Psoas muscle (tissue), 8 donors: ENCODE measurements at regions of chr3 and their contacts with region 1.

Region 1: DNA sequence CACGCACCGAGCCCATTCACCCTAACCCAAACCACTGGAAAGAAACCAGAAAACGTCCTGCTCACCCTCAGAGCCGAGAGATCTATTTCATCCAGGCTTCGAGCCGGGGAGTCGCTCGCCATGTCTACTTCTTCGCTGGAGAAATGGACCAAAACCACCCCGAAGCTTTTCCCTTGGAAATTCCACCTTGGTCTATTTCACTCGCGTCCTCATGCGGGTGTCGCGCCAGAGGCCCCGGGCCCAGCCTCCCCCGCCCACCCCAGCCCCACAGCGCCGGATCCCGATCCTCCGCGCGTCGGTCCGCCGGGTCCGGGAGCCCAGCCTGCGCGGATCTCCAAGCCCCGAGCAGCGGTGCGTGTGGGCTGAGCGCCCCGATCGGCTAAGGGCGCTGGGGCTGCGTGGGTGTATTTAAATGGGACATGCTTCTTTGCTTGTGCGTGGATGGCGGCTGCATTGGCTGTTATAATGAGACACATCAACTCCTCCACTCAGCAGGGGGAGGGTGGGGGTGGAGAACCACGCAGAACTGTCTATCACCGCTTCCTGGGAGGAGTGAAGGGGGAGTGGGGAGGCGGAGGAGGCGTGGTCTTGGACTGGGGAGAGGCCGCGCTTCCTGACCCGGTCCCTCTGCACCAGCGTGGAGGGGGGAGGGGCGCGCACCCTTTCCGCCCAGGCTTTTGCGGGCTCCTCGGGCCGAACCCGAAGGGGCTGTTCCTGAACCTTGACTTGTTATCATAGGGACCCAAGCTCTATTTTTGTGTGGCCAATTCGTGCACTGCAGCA is at the start of gene TNIK:
- DNase-seq: peak; percentile 89 to 94
- ATAC-seq: peak; percentile 92 to 96 (median 93)
- H3K4me3 ChIP-seq: peak within 1 kb of the TSS; percentile 79
- H3K27ac ChIP-seq: peak within 1 kb of the TSS; percentile 87
- H3K4me1 ChIP-seq: peaks cover 21% of the 10 kb centered on the region
- H3K27me3 ChIP-seq: no peaks in the 10 kb centered on the region
- CTCF ChIP-seq: peak; percentile 29
- total RNA-seq, gene TNIK: 12.5 to 32.4 (median 24.8) TPM

Region 2: DNA sequence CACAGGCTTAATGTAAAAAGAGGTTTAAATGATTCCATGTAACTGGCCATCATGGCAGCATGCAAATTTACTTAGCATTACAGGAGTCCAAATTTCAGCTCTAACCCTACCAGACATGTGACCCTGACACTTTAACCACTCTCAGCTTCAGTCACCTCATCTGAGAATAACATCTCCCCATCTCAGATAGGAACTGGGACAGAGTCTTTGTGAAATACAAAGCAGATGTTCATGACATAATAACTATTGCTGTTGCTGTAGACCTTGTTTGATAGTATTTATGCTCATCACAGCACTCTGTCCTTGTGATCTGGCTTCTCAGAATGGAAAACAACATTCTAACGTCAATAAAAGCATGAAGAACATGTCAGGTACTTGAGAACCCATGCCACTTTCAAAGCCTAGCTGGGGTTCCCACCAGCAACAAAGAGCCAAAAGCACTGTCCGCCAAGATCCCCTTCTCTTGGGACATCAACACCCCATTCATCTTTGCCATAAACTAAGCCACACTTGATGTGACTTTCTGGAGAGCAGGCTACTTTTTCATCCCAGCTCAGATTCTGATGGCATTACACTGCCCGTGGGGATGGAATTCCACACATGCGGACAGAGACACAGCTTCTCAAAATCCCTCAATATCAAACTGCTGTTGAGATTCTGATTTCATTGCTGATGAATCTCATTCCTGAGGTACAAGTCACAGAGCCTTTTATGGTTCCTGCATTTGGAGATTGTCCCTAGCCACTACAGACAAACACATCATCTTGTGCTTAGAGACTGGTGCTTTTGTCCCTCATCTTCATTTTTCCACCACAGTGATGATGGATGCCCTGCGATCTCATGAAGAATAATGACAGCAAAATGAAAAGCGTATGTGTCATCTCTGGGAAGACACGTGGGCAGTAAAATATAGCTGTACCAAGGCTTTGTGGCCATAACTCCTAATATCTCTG is 202.6 kb before region 1 on chr3:
- intact Hi-C with region 1: loop called in 1 of 2 experiments (anchors 5 kb)
- DNase-seq: no peak
- ATAC-seq: peak; percentile 79 to 87 (median 83)
- H3K4me3 ChIP-seq: no peak overlapping the region
- H3K27ac ChIP-seq: peak overlapping the region; percentile 84
- H3K4me1 ChIP-seq: peaks cover 33% of the 10 kb centered on the region
- H3K27me3 ChIP-seq: no peaks in the 10 kb centered on the region
- CTCF ChIP-seq: no peak

Region 3: GRCh38 chr3:171320750-171321558 is 139.2 kb before region 1 on chr3:
- intact Hi-C with region 1: loop called in 1 of 2 experiments (anchors 5 kb)
- DNase-seq: peak in 1 of 2 donors; percentile 57
- ATAC-seq: peak; percentile 91 to 95 (median 92)
- H3K4me3 ChIP-seq: no peak overlapping the region
- H3K27ac ChIP-seq: peak overlapping the region; percentile 90
- H3K4me1 ChIP-seq: peaks cover 57% of the 10 kb centered on the region
- H3K27me3 ChIP-seq: no peaks in the 10 kb centered on the region
- CTCF ChIP-seq: no peak

Region 4: GRCh38 chr3:171339598-171339997 is 120.5 kb before region 1 on chr3:
- intact Hi-C with region 1: loop called in 1 of 2 experiments (anchors 5 kb)
- DNase-seq: no peak
- ATAC-seq: no peak
- H3K4me3 ChIP-seq: no peak overlapping the region
- H3K27ac ChIP-seq: no peak overlapping the region
- H3K4me1 ChIP-seq: peaks cover 29% of the 10 kb centered on the region
- H3K27me3 ChIP-seq: no peaks in the 10 kb centered on the region
- CTCF ChIP-seq: no peak

Region 5: GRCh38 chr3:171407759-171408158 is 52.4 kb before region 1 on chr3:
- intact Hi-C with region 1: no loop called
- DNase-seq: no peak
- ATAC-seq: peak; percentile 63 to 81 (median 72)
- H3K4me3 ChIP-seq: no peak overlapping the region
- H3K27ac ChIP-seq: peak overlapping the region; percentile 63
- H3K4me1 ChIP-seq: peaks cover 25% of the 10 kb centered on the region
- H3K27me3 ChIP-seq: no peaks in the 10 kb centered on the region
- CTCF ChIP-seq: no peak

Region 6: DNA sequence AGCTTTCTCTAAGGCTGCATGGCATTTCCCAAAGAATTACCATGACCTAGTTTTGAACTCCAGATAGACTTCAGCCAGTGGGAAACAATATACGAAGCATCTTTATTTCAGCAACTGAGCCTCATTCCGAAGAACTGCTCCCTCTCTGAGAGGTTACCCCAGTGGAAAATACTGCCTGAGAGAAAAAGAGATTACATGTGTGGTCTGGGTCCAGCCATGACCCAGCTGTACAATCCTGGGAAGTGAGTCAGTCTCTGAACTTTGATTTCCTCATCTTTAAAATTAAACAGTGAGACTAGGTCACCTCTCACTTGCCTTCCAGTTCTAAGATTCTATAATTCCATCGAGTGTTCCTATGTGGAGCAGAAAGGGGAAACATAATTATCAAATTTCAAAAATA is 42.3 kb before region 1 on chr3:
- intact Hi-C with region 1: loop called in 1 of 2 experiments (anchors 5 kb)
- DNase-seq: peak in 1 of 2 donors; percentile 44
- ATAC-seq: peak; percentile 86 to 91 (median 88)
- H3K4me3 ChIP-seq: no peak overlapping the region
- H3K27ac ChIP-seq: peak overlapping the region; percentile 72
- H3K4me1 ChIP-seq: peaks cover 42% of the 10 kb centered on the region
- H3K27me3 ChIP-seq: no peaks in the 10 kb centered on the region
- CTCF ChIP-seq: no peak